T-cell (primary cell): ENCODE measurements at regions of chr10 and their contacts with region 1.

Region 1: DNA sequence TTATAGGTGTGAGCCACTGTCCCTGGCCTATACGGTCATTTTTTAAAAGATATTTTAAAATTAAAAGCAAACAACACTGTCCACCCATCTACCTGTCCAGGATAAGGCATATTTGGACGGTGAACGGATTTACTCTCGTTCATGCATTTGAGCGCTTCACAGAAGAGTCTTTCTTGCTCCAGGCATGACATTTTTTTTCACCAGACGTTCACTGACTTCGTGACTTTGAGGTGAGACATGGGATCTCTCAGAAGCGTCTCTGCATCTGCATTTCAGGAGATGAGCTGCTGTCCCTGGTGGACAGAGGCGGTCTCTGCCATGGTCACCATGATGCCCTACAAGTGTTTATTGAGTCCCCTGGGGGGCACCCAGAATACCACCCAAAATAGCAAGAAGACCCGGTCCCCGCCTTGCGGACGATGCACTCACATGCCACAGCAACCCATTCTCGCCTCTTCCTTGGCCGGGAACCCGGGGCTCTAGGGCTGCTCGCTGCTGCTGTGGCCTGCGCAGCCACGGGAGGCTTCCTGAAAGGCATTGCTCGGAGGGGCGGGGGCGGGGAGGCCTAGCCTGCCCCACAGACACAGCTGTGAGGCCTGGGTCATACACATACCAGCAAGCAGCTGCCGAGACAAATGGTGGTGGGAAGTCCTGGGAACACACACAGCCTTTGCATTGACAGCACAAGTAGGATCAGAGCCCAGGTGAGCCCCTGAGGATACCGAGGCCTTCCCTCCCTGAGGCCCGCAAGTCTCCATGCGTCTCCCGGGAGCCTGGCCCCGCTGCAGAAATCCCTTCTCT is 84.4 kb downstream of the RGS10 start:
- DNase-seq: no peak
- ATAC-seq: no peak
- H3K4me3 ChIP-seq: no peak overlapping the region
- H3K4me3 Mint-ChIP-seq: no peak overlapping the region
- H3K27ac ChIP-seq: no peak overlapping the region
- H3K27ac Mint-ChIP-seq: no peak overlapping the region
- H3K4me1 ChIP-seq: no peaks in the 10 kb centered on the region
- H3K4me1 Mint-ChIP-seq: peaks cover 0 to 2% (median 0%) of the 10 kb centered on the region in 3 donors
- H3K27me3 ChIP-seq: peaks cover 0 to 8% of the 10 kb centered on the region in 2 experiments
- H3K27me3 Mint-ChIP-seq: no peaks in the 10 kb centered on the region

Region 2: DNA sequence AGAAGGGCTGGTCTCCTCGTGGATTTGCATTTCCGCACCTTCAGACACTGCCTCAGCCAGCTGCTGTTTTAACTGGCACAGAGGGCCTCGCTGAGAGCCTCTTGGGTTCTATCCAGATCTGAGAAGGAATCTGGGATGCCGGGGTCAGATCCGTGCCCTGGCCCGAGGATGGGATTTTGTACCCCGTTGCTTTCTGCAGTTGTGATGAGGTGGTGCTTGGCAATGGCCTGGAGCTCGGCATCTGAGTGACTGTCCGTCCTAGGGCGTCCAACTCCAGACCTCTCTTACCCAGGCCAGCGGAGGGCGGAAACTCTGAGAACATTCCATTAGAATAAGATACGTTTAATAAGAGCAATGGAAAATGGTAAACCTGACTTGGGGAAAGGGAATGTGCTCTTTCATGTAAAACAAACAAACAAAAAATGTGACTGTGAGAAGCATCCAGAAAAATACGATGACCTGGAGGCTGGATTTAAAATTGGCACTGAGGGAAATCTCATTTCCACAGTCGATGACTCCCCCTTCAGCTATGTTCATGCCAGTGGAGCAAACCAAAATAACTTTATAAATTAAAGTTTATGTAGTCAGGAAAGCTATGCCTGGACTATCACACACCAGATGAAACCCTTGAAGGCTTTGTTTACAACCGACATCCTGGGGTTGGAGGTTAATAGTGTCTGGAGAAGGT is 211.2 kb before region 1 on chr10:
- CTCF ChIA-PET with region 1: interaction called in 1 of 2 experiments, 10 read pairs
- POLR2A ChIA-PET with region 1: no interaction called
- DNase-seq: no peak
- ATAC-seq: no peak
- H3K4me3 ChIP-seq: no peak overlapping the region
- H3K4me3 Mint-ChIP-seq: no peak overlapping the region
- H3K27ac ChIP-seq: no peak overlapping the region
- H3K27ac Mint-ChIP-seq: no peak overlapping the region
- H3K4me1 ChIP-seq: peaks cover 0 to 2% of the 10 kb centered on the region in 2 experiments
- H3K4me1 Mint-ChIP-seq: peaks cover 25 to 46% (median 40%) of the 10 kb centered on the region in 3 donors
- H3K27me3 ChIP-seq: no peaks in the 10 kb centered on the region
- H3K27me3 Mint-ChIP-seq: no peaks in the 10 kb centered on the region

Region 3: GRCh38 chr10:119478811-119479341 is 20.7 kb after region 1 on chr10:
- CTCF ChIA-PET with region 1: no interaction called
- POLR2A ChIA-PET with region 1: no interaction called
- DNase-seq: peak in 1 of 35 experiments; percentile 37
- ATAC-seq: peak; percentile 43 to 68 (median 48)
- H3K4me3 ChIP-seq: no peak overlapping the region
- H3K4me3 Mint-ChIP-seq: peak overlapping the region; percentile 42 to 64 (median 45)
- H3K27ac ChIP-seq: peak overlapping the region; percentile 5
- H3K27ac Mint-ChIP-seq: peak overlapping the region; percentile 72 to 76
- H3K4me1 ChIP-seq: peaks cover 17 to 28% of the 10 kb centered on the region in 2 experiments
- H3K4me1 Mint-ChIP-seq: peaks cover 27 to 39% (median 29%) of the 10 kb centered on the region in 3 donors
- H3K27me3 ChIP-seq: no peaks in the 10 kb centered on the region
- H3K27me3 Mint-ChIP-seq: no peaks in the 10 kb centered on the region

Region 4: DNA sequence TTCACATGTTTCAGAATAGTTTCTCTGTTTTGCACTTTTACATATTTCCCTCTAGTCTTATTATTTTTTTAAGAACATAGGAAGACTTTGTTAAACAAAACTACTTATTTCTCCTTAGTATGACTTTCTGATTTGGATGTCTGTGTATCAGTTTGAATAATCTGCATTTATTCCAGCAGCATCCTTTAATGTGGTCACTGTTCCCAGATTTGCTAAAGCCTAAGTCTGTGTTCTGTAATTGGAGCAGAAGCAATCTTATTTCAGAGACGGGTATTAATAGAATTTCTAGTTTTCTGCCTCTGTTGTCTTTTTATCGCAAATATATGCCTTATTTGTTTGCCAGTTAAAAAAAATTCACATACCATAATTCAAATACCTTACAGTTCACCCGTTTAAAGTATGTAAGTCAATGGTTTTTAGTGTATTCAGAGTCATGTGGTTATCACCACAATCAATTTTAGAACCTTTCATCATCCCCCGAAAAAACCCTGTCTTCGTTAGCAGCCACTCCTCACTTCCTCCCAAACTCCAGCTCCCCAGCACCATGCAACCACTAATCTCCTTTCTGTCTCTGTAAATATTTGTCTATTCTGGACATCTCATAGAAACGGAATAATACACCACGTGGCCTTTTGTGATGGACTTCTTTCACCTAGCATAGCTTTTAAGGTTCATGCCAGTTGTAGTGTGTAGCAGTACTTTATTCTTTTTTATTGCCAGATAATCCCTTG is 326.3 kb after region 1 on chr10:
- CTCF ChIA-PET with region 1: no interaction called
- POLR2A ChIA-PET with region 1: no interaction called
- DNase-seq: peak in 6 of 35 experiments; percentile 2 to 37 (median 4)
- ATAC-seq: peak in 3 of 4 experiments; percentile 69 to 91 (median 77)
- H3K4me3 ChIP-seq: no peak overlapping the region
- H3K4me3 Mint-ChIP-seq: peak overlapping the region in 2 of 3 donors; percentile 9 to 29
- H3K27ac ChIP-seq: no peak overlapping the region
- H3K27ac Mint-ChIP-seq: peak overlapping the region; percentile 7 to 50
- H3K4me1 ChIP-seq: peaks cover 6 to 19% of the 10 kb centered on the region in 2 experiments
- H3K4me1 Mint-ChIP-seq: peaks cover 29 to 39% (median 34%) of the 10 kb centered on the region in 3 donors
- H3K27me3 ChIP-seq: no peaks in the 10 kb centered on the region
- H3K27me3 Mint-ChIP-seq: no peaks in the 10 kb centered on the region